GM23248 (cell line): ENCODE measurements at regions of chr22 and their contacts with region 1.

Region 1: GRCh38 chr22:29387921-29388758 is at the start of gene AP1B1:
- DNase-seq: peak; percentile 96
- H3K4me3 ChIP-seq: peak within 1 kb of the TSS; percentile 95
- H3K27ac ChIP-seq: no peak within 1 kb of the TSS; the same call in 1 of the 2 replicates
- H3K4me1 ChIP-seq: peaks cover 4% of the 10 kb centered on the region; the same call in 1 of the 2 replicates
- H3K27me3 ChIP-seq: no peaks in the 10 kb centered on the region
- total RNA-seq, gene AP1B1: 45.7 and 49.8 TPM in 2 replicates

Region 2: DNA sequence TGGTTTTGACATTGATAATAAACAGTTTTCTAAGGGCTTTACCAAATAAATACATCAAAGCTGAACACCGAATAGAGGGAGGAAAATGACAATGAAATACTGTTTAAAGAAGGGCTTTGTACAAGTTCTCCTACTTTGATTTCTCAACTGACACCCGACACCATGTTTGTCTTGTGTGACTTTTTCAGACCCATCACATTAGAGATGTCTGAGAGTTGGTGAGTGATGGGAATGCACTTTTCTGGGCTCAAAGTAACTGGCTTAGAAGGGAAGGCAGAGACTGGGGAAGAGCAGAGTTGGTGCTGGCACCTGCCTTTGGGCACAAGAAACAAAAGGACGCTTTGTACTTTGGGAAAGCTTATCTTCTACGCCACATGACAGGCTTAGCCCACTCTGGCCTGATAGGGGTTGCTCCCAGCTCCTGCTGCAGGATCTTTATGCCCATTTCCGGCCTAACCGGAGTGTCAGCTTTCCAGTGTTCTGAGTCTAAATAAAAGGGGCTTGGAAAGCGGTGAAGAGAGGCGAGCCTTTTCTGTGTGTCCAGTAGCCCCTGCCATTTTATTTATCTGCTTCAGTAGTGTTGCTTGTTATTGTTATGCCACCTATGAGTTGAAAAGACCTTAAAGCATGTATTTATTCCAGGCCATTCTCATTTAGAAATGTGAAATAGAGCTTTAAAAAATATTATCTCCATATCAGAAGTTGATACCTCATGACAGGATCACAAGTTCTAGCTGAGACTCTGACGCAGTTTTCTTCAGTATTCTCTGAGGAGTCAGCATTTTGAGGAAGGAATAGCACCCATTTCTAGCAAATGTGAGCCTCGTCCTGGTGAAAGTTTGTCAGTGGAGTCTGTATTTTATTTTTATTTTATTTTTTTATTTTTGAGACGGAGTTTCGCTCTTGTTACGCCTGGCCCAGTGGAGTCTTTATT is 291.1 kb before region 1 on chr22:
- in situ Hi-C with region 1: no loop called
- DNase-seq: no peak
- H3K4me3 ChIP-seq: no peak overlapping the region
- H3K27ac ChIP-seq: no peak overlapping the region
- H3K4me1 ChIP-seq: peaks cover 16% of the 10 kb centered on the region
- H3K27me3 ChIP-seq: no peaks in the 10 kb centered on the region

Region 3: GRCh38 chr22:29580200-29580810 is 192.2 kb after region 1 on chr22:
- in situ Hi-C with region 1: no loop called
- DNase-seq: no peak
- H3K4me3 ChIP-seq: peak overlapping the region; percentile 90
- H3K27ac ChIP-seq: no peak overlapping the region
- H3K4me1 ChIP-seq: no peaks in the 10 kb centered on the region
- H3K27me3 ChIP-seq: no peaks in the 10 kb centered on the region

Region 4: GRCh38 chr22:30079952-30080533 is 691.9 kb after region 1 on chr22 and contains the start of gene HORMAD2:
- in situ Hi-C with region 1: loop called (anchors 25 kb)
- DNase-seq: peak; percentile 50
- H3K4me3 ChIP-seq: peak within 1 kb of the TSS; percentile 39; the same call in 1 of the 2 replicates
- H3K27ac ChIP-seq: no peak within 1 kb of the TSS
- H3K4me1 ChIP-seq: no peaks in the 10 kb centered on the region
- H3K27me3 ChIP-seq: peaks cover 22% of the 10 kb centered on the region
- total RNA-seq, gene HORMAD2: not detected in 2 replicates